Activated B cell treated with CpG ODN at 0.5 μM for 24 hours (primary cell): ENCODE measurements at regions of chr12 and their contacts with region 1.

Region 1: DNA sequence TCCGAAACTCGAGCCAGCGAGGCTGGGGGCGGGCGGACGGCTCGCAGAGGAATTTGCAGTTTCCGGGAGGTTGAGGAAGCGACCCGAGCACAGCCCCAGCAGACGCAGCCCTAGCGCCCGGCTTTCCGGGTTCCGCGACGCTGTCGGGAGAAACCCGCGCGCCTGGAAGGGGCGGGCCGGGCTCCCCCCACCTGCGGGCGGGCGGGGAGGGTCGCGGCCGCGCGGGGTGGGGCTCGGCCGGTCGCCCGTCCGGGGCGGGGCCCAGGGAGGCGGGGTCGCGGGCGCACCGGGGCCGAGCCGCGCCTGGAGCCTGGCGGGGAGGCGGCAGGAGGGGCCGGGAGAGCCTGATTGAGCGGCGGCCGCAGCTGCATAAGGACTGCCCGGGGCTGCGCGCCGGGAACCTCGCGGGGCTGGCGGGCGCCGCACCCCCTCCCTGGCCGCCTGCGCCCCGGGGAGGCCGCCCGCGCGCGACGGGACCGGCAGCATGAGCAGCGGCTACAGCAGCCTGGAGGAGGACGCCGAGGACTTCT is at the start of gene RASSF3:
- DNase-seq: peak; percentile 77
- ATAC-seq: peak; percentile 50
- H3K4me3 Mint-ChIP-seq: peak within 1 kb of the TSS; percentile 99
- H3K27ac Mint-ChIP-seq: peak within 1 kb of the TSS; percentile 97
- H3K4me1 Mint-ChIP-seq: peaks cover 44% of the 10 kb centered on the region
- H3K27me3 Mint-ChIP-seq: no peaks in the 10 kb centered on the region
- CTCF ChIP-seq: no peak
- total RNA-seq, gene RASSF3: 90.9 and 95.7 TPM in 2 replicates

Region 2: GRCh38 chr12:64222009-64222765 is 388.0 kb before region 1 on chr12 and contains the start of gene KICS2:
- CTCF ChIA-PET with region 1: no interaction called
- POLR2A ChIA-PET with region 1: no interaction called
- intact Hi-C with region 1: loop called (anchors 2 kb)
- DNase-seq: peak; percentile 90
- ATAC-seq: peak; percentile 86
- H3K4me3 Mint-ChIP-seq: peak within 1 kb of the TSS; percentile 96
- H3K27ac Mint-ChIP-seq: peak within 1 kb of the TSS; percentile 97
- H3K4me1 Mint-ChIP-seq: peaks cover 27% of the 10 kb centered on the region
- H3K27me3 Mint-ChIP-seq: no peaks in the 10 kb centered on the region
- CTCF ChIP-seq: no peak
- total RNA-seq, gene KICS2: 16.5 and 16.8 TPM in 2 replicates

Region 3: DNA sequence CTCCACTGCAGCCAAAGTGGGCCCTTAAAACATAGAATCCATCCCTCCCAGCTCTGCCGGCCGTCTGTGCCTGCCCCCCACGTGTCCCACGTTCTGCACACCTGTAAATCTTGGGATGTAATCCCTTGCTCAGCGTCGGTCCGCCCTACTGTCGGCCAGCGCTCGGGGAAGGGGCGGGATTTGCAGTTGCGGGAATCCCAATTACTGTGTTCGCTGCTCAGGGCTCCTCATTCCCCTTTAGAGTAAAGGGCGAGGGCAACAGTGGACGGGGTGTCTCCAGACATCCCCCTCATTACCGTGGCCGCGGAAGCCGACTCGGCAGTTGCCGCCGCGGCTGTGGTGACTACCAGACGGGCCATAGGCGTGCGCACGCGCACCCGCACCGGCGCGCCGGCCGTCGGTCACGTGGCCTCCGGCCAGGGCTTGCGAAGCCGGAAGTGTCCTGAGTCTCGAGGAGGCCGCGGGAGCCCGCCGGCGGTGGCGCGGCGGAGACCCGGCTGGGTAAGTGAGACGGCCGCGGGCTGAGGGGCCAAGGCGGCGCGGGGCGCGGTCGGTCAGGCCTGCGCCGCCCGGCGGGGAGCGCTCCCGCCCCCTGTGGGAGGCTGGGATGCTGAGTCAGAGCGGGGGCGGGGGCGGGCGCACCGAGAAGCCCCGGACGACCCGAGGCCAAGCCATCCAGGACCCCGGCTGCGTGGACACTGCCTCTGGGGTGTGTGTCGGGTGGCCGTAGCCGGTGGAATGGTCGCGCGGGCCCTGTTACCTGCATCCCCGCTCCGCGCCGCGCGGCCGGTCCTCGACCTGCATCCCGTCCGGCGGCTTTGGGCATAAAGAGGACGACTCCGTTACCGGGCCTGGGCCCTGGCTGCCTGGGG is 158.3 kb before region 1 on chr12 and contains the start of gene TBK1:
- CTCF ChIA-PET with region 1: no interaction called
- POLR2A ChIA-PET with region 1: no interaction called
- intact Hi-C with region 1: loop called (anchors 2 kb)
- DNase-seq: peak; percentile 82
- ATAC-seq: peak; percentile 82
- H3K4me3 Mint-ChIP-seq: peak within 1 kb of the TSS; percentile 97
- H3K27ac Mint-ChIP-seq: peak within 1 kb of the TSS; percentile 88
- H3K4me1 Mint-ChIP-seq: peaks cover 44% of the 10 kb centered on the region
- H3K27me3 Mint-ChIP-seq: no peaks in the 10 kb centered on the region
- CTCF ChIP-seq: no peak
- total RNA-seq, gene TBK1: 32.6 and 37.4 TPM in 2 replicates

Region 4: DNA sequence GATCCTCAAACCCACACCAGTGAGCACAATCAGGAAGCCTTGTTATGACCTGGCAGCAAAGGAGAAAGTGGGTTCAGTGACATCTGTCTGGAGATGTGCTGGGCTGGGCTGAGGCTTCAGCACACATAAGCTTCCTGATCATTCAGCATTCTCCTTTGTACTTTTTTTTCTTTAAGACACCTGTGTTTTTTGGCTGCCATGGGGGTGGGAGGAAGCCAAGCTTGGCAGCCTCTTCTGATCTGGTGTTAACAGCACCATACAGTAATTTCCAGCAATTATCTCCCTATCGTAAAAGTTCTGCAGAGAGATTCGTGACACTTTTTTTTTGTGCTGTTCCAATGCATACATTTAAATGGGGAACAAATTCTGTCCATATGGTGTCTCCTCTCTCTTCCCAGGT is 38.8 kb before region 1 on chr12:
- CTCF ChIA-PET with region 1: no interaction called
- POLR2A ChIA-PET with region 1: no interaction called
- intact Hi-C with region 1: no loop called
- DNase-seq: no peak
- ATAC-seq: no peak
- H3K4me3 Mint-ChIP-seq: no peak overlapping the region
- H3K27ac Mint-ChIP-seq: no peak overlapping the region
- H3K4me1 Mint-ChIP-seq: no peaks in the 10 kb centered on the region
- H3K27me3 Mint-ChIP-seq: no peaks in the 10 kb centered on the region
- CTCF ChIP-seq: no peak

Region 5: GRCh38 chr12:64625243-64626077 is 15.2 kb after region 1 on chr12:
- CTCF ChIA-PET with region 1: interaction called, 9 read pairs
- POLR2A ChIA-PET with region 1: interaction called, 256 read pairs
- intact Hi-C with region 1: loop called (anchors 1 kb)
- DNase-seq: no peak
- ATAC-seq: peak; percentile 51
- H3K4me3 Mint-ChIP-seq: peak overlapping the region; percentile 85
- H3K27ac Mint-ChIP-seq: peak overlapping the region; percentile 96
- H3K4me1 Mint-ChIP-seq: peaks cover 85% of the 10 kb centered on the region
- H3K27me3 Mint-ChIP-seq: no peaks in the 10 kb centered on the region
- CTCF ChIP-seq: no peak

Region 6: DNA sequence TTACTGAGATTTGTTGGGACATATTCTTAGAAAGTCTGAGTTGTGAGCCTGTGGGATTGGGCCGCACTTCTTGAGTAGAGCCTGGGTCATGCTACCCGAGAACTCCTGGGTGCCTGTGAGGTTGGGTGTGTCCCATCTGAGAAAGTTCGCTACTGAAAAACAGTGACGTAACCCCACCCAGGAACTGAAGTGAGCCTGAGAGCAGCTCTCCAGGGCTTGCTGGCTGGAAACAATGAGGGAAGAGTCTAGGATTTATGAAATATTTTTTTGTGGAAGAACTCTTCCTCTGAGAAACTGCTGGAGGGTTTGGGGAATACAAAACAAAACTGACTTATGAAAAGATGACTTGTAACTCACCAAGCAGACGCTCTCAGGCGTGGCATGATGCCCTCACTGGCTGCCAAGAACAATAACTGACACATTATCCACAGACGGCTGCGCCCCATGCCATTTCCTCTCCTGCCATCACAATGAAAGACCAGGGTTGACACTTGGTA is 69.3 kb after region 1 on chr12:
- CTCF ChIA-PET with region 1: interaction called, 8 read pairs
- POLR2A ChIA-PET with region 1: interaction called, 37 read pairs
- intact Hi-C with region 1: loop called (anchors 1 kb)
- DNase-seq: no peak
- ATAC-seq: peak; percentile 64
- H3K4me3 Mint-ChIP-seq: peak overlapping the region; percentile 53
- H3K27ac Mint-ChIP-seq: peak overlapping the region; percentile 82
- H3K4me1 Mint-ChIP-seq: peaks cover 95% of the 10 kb centered on the region
- H3K27me3 Mint-ChIP-seq: no peaks in the 10 kb centered on the region
- CTCF ChIP-seq: no peak

Region 7: DNA sequence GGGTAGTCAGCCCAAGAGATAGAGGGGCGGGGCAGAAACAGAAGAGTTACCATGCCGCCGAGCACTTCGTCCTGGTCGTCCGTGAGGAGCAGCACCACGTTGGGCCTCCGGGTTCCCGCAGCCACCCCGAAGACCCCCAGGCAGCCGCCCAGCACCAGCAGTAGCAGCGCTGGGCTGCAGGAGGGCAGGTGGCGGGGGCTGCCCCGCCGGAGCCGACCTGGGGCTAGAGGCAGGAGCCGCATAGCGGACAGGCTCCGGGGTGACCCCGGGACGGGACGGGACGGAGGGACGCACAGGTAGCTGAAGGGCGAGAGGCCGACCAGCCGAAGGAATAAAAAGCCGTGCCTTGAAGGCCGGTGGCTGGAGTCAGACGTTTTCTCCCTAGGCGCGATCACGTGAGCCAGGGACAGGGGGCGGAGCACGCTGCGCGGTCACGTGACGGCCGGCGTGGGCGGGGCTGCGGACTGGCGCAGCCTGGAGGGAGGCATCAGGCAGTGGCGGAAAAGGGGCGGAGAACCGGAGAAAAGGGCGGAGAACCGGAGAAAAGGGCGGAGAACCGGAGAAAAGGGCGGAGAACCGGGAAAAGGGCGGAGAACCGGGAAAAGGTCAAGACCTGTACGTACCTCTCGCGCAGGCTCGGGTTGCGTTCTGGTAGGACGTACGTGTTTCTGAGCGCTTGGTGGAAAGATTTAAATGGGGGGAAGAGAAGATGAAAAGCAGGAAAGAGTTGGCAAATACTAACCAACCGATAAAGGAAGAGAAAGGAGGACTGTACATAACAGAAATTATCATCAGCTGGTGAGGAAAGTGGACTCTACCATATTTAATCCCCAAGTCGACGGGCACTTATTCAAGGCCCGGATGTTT is 149.1 kb after region 1 on chr12 and contains the start of gene GNS:
- CTCF ChIA-PET with region 1: no interaction called
- POLR2A ChIA-PET with region 1: no interaction called
- intact Hi-C with region 1: loop called (anchors 2 kb)
- DNase-seq: peak; percentile 98
- ATAC-seq: peak; percentile 93
- H3K4me3 Mint-ChIP-seq: peak within 1 kb of the TSS; percentile 92
- H3K27ac Mint-ChIP-seq: peak within 1 kb of the TSS; percentile 83
- H3K4me1 Mint-ChIP-seq: peaks cover 41% of the 10 kb centered on the region
- H3K27me3 Mint-ChIP-seq: no peaks in the 10 kb centered on the region
- CTCF ChIP-seq: no peak
- total RNA-seq, gene GNS: 16.3 and 17.7 TPM in 2 replicates

Region 8: DNA sequence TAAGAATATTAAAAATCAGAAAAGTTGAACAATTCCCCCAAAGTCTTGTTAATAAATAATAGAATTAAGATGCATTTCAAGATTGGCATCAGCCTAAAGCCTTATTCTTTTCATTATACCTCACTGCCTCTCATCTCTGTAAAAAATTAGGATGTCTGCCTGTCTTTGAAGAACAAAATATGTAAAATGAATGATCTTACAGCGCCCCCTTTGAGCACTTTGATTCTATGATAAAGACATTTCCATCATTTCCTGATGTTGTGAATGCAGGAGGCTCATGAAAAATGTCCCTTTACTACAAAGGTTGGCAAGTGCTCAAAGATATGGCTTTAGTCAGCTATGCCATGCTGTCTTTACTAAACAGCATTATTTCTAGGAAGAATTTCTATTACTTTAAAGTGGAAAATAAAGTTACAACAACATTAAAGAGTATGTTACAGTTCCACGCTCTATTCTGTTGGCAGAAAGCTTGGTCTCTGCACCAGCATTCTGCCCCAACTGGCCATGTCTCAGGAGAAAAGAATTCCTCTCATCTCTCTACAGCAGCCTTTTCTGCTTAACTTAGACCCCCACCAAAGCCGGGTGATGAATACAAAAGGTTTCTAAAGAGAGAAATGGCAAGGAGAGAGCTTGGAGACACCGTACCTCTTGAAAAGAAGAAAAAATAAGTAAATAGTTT is 1425.2 kb after region 1 on chr12:
- CTCF ChIA-PET with region 1: no interaction called
- POLR2A ChIA-PET with region 1: no interaction called
- intact Hi-C with region 1: no loop called
- DNase-seq: no peak
- ATAC-seq: no peak
- H3K4me3 Mint-ChIP-seq: no peak overlapping the region
- H3K27ac Mint-ChIP-seq: no peak overlapping the region
- H3K4me1 Mint-ChIP-seq: no peaks in the 10 kb centered on the region
- H3K27me3 Mint-ChIP-seq: peaks cover 6% of the 10 kb centered on the region
- CTCF ChIP-seq: no peak